ENCODE measurements at regions of chr11 and their contacts with region 1.

Region 1: GRCh38 chr11:34234086-34234740 is 123.6 kb downstream of the ABTB2 start:
- DNase-seq: peak; percentile 67
- ATAC-seq: peak; percentile 75
- H3K4me3 Mint-ChIP-seq: peak overlapping the region; percentile 73
- H3K27ac Mint-ChIP-seq: peak overlapping the region; percentile 97
- H3K4me1 Mint-ChIP-seq: peaks cover 76% of the 10 kb centered on the region
- H3K27me3 Mint-ChIP-seq: no peaks in the 10 kb centered on the region
- CTCF ChIP-seq: no peak

Region 2: DNA sequence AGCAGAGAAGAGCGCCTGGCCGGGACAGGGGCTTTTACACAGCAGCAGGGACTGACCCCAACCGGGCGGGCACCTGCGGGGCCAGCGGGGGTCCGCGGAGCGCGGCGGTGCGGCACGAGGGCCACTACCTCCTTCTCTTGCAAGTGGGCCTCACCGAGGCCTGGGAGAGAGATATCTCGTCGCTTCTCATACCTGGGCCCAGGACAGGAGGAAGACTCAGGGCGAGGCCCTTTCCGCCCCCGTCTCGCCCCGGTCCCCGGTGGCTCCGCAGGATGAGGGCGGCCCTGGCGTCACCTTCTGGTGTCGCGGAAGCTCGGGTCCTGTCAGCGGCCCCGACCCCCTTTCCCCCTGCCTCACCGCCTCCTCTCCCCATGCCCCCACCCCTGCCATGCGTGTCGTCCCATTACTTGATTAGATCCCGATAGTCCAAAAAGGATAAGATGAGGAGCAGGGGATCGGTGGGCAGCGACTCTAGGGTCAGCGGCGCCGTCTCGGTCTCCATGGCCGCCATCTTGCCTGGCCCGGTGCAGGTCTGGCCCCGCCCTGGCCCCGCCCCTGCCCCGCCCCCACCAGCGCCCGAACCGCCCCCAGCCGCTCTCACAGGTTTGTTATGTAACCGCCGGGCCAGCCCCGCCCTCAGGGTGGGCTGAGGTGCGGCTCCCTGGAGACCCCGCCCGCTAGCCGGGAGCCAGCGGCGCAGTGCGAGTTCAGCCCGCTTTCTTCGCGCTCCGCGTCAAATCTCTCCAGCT is 460.1 kb before region 1 on chr11 and contains the start of gene FBXO3:
- CTCF ChIA-PET with region 1: no interaction called
- POLR2A ChIA-PET with region 1: no interaction called
- intact Hi-C with region 1: loop called (anchors 10 kb)
- DNase-seq: peak; percentile 80
- ATAC-seq: peak; percentile 92
- H3K4me3 Mint-ChIP-seq: peak within 1 kb of the TSS; percentile 96
- H3K27ac Mint-ChIP-seq: peak within 1 kb of the TSS; percentile 94
- H3K4me1 Mint-ChIP-seq: peaks cover 38% of the 10 kb centered on the region
- H3K27me3 Mint-ChIP-seq: peaks cover 15% of the 10 kb centered on the region
- CTCF ChIP-seq: no peak
- total RNA-seq, gene FBXO3: 22.3 and 23.5 TPM in 2 replicates

Region 3: GRCh38 chr11:34051349-34052035 is 182.7 kb before region 1 on chr11 and contains the start of gene CAPRIN1:
- CTCF ChIA-PET with region 1: no interaction called
- POLR2A ChIA-PET with region 1: interaction called, 7 read pairs
- intact Hi-C with region 1: loop called (anchors 2 kb)
- DNase-seq: peak; percentile 87
- ATAC-seq: peak; percentile 73
- H3K4me3 Mint-ChIP-seq: peak within 1 kb of the TSS; percentile 99
- H3K27ac Mint-ChIP-seq: peak within 1 kb of the TSS; percentile 98
- H3K4me1 Mint-ChIP-seq: peaks cover 37% of the 10 kb centered on the region
- H3K27me3 Mint-ChIP-seq: no peaks in the 10 kb centered on the region
- CTCF ChIP-seq: no peak
- total RNA-seq, gene CAPRIN1: 152 and 158 TPM in 2 replicates

Region 4: GRCh38 chr11:34180040-34180813 is 54.0 kb before region 1 on chr11:
- CTCF ChIA-PET with region 1: interaction called, 23 read pairs
- POLR2A ChIA-PET with region 1: interaction called, 36 read pairs
- intact Hi-C with region 1: loop called (anchors 1 kb)
- DNase-seq: no peak
- ATAC-seq: no peak
- H3K4me3 Mint-ChIP-seq: no peak overlapping the region
- H3K27ac Mint-ChIP-seq: no peak overlapping the region
- H3K4me1 Mint-ChIP-seq: peaks cover 49% of the 10 kb centered on the region
- H3K27me3 Mint-ChIP-seq: no peaks in the 10 kb centered on the region
- CTCF ChIP-seq: no peak

Region 5: GRCh38 chr11:34250732-34251639 is 16.8 kb after region 1 on chr11:
- CTCF ChIA-PET with region 1: interaction called, 6 read pairs
- POLR2A ChIA-PET with region 1: interaction called, 96 read pairs
- intact Hi-C with region 1: loop called (anchors 1 kb)
- DNase-seq: peak; percentile 63
- ATAC-seq: peak; percentile 98
- H3K4me3 Mint-ChIP-seq: peak overlapping the region; percentile 55
- H3K27ac Mint-ChIP-seq: peak overlapping the region; percentile 71
- H3K4me1 Mint-ChIP-seq: peaks cover 55% of the 10 kb centered on the region
- H3K27me3 Mint-ChIP-seq: no peaks in the 10 kb centered on the region
- CTCF ChIP-seq: no peak